Caco-2 (cell line): ENCODE measurements at regions of chr7 and their contacts with region 1.

Region 1: GRCh38 chr7:47546733-47547494 is 35.0 kb downstream of the TNS3 start:
- DNase-seq: peak; percentile 34 to 76
- H3K4me3 ChIP-seq: no peak overlapping the region
- H3K4me3 Mint-ChIP-seq: peak overlapping the region; percentile 18
- H3K27ac Mint-ChIP-seq: peak overlapping the region; percentile 74
- H3K4me1 ChIP-seq: peaks cover 67% of the 10 kb centered on the region
- H3K4me1 Mint-ChIP-seq: peaks cover 50% of the 10 kb centered on the region
- H3K27me3 ChIP-seq: no peaks in the 10 kb centered on the region
- H3K27me3 Mint-ChIP-seq: no peaks in the 10 kb centered on the region
- CTCF ChIP-seq: no peak

Region 2: DNA sequence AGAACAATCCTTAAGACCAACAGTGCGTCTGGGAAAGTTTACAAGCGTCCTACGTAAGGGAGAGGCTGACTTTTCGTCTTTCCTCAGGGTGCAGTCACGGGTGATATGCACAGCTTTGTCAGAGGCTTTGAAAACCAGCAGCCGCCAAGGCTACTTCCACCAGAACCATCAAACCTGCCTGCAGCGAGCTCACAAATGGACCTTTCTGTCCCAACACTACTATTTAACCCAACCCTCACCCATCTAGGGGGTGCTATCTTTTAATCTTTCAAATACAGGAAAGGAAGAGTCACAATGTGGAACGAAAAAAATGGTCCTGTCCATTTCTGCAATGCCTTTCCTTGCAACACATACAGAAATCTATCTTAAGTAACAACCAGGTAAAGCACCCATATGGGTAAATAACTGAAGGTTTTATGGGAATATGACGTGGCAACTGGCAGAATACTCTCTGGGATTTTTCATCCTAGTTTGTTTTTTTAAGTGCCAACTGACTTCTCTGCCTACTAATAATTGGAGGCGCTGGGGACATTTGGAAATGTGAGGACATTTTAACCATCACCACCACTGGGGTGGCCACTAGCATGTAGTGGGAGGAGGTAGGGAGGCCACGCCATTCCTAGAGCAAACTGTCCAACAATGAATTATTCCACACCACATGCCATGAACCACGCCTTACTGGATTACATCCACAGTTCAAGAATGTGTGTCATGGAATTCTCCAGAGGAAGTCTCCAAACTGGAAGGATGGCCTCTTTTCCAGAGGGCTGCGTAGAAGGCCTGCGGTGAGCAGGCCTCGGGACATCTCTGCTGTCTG is 10.5 kb after region 1 on chr7:
- CTCF ChIA-PET with region 1: interaction called, 5 read pairs
- POLR2A ChIA-PET with region 1: no interaction called
- intact Hi-C with region 1: loop called (anchors 1 kb)
- DNase-seq: no peak
- H3K4me3 ChIP-seq: no peak overlapping the region
- H3K4me3 Mint-ChIP-seq: peak overlapping the region; percentile 37
- H3K27ac Mint-ChIP-seq: peak overlapping the region; percentile 92
- H3K4me1 ChIP-seq: peaks cover 81% of the 10 kb centered on the region
- H3K4me1 Mint-ChIP-seq: peaks cover 61% of the 10 kb centered on the region
- H3K27me3 ChIP-seq: no peaks in the 10 kb centered on the region
- H3K27me3 Mint-ChIP-seq: no peaks in the 10 kb centered on the region
- CTCF ChIP-seq: no peak